Left cardiac atrium (tissue), 4 donors: ENCODE measurements at regions of chr19 and their contacts with region 1.

Region 1: DNA sequence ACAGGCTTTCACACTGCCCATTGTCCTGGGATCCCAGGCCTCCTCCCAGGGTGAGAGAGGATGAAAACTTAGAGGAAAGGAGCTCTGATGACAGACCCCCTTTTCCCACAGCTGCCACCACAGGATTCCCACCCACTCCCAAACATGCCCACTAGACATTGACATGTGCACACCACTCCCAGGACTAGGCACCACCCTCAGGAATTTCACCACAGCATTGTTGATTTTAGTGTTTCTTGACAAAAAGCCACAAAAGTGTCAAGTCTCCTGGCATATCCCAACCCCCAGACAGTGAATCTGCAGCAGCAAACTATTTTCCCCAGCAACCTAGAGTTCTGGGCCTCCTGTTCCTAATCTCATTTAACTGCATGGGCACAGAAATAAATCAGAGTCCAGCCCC is 10.1 kb downstream of the ZNF714 start:
- DNase-seq: no peak
- ATAC-seq: no peak

Region 2: GRCh38 chr19:21151460-21151859 is 59.4 kb after region 1 on chr19:
- intact Hi-C with region 1: loop called in 1 of 2 experiments (anchors 5 kb)
- DNase-seq: no peak
- ATAC-seq: no peak